Vagina (tissue), 2 donors: ENCODE measurements at regions of chr17 and their contacts with region 1.

Region 1: DNA sequence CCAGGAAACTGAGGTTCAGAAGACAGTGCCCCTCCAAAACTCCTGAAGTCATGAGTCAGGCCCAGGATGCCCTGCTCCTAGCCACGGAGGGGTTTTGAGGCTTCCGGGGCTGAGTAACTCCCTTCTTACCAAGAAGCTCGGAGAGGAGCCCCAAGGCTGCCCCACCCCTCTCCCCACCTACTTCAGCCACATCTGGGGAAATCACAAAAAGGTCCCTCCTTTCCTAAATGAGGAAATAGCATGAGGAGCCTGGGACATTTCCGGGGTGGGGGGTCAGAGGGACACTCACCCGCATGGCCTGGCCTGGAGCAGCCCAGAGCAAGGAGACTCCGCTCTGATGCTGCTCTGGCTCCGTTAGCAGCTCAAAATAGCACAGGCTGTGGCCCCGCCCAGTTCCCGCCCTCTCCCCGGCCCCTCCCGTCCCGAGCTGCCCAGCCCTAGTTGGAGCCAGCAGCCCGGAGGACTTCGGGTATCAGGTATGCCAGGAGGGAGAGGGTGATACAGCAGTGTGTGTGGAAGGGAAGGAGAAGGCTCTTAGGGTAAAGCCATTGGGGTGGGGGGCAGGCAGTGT is 40.1 kb downstream of the MYO18A start:
- DNase-seq: no peak
- H3K4me3 ChIP-seq: peak overlapping the region; percentile 44 to 54
- H3K27ac ChIP-seq: peak overlapping the region; percentile 85
- H3K4me1 ChIP-seq: peaks cover 41% of the 10 kb centered on the region
- H3K27me3 ChIP-seq: no peaks in the 10 kb centered on the region
- CTCF ChIP-seq: no peak
- POLR2A ChIP-seq: peak in 1 of 2 donors; percentile 67

Region 2: GRCh38 chr17:29176558-29177351 is 36.6 kb after region 1 on chr17:
- intact Hi-C with region 1: loop called (anchors 5 kb)
- DNase-seq: no peak
- H3K4me3 ChIP-seq: peak overlapping the region; percentile 48 to 64
- H3K27ac ChIP-seq: peak overlapping the region; percentile 93
- H3K4me1 ChIP-seq: peaks cover 52% of the 10 kb centered on the region
- H3K27me3 ChIP-seq: no peaks in the 10 kb centered on the region
- CTCF ChIP-seq: no peak
- POLR2A ChIP-seq: no peak

Region 3: DNA sequence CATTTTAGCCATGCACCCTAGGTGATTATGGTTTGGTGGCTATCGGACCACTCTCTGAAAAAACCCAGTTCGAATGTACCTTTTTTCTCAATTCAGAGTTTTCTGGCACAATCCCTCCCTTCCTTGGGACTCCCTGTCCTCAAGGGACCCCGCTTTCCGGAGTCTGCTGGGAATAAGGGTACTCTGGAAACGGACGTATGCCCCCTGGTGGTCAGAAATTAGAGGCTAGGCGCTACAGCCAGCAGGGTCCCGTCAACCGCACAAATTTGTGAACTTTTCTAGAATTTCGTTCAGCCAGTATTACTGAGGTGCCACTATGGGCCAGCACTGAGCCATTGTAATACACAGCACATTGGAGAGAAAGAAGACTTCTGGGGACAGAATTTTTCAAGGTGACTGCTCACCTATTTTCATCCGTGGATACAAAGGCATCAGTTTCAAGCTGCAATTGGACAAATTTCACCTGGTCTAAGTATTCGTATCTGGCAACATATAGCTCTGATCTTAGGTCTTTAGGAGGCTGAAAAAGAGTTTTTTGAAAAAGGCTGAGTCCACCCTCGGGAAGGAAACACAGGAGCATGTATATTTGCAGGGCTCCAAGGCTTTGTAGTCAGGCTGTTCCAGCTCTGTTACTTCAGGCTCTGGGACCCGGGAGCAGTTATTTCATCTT is 79.4 kb after region 1 on chr17:
- intact Hi-C with region 1: loop called (anchors 1 kb)
- DNase-seq: no peak
- H3K4me3 ChIP-seq: no peak overlapping the region
- H3K27ac ChIP-seq: no peak overlapping the region
- H3K4me1 ChIP-seq: peaks cover 8% of the 10 kb centered on the region
- H3K27me3 ChIP-seq: no peaks in the 10 kb centered on the region
- CTCF ChIP-seq: peak; percentile 84 to 89 (median 88)
- POLR2A ChIP-seq: no peak